ENCODE measurements at regions of chr1 and their contacts with region 1.

Region 1: DNA sequence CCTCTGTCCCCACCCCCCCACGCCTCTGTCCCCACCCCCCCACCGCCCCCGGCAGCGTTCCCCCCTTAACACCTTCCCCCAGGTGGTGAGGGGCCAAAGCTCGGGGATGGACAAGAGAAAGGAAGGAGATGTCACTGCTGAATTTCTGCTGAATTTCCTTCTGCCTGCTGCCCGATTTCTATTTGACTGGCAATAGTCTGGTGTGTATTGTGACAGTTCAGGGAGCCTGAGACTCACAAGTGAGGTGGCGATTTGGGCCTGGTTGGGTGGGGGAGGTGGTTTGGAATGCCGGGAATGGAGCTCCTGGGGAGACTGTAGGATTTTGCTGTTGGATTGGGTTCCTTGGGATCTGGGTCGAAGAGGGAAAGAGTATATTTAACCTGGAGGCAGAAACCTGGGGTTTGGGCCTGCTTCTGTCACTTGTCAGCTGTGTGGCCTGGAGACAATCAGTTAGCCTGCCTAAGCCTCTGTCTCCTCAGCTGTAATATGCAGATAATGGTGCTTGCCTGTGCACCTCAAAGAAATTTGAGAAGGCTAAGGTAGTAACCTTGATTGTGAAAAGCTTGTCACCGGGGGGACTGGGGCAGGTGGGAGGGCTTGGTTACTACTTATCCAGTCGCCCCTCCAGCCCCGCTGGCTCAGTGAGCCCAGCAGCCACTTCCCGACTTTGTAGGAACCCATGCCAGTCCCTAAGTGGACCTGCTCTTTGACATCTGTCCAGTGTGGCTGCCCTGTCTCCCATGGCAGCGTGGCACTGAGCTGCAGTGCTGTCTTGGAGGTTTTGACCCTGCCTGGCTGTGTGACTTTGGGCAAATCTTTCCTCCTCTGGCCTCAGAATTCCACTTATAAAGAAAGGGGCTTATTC is 7.7 kb upstream of the LMNA start:
- DNase-seq: no peak
- H3K4me3 Mint-ChIP-seq: peak overlapping the region; percentile 72
- H3K27ac Mint-ChIP-seq: peak overlapping the region; percentile 96
- H3K4me1 Mint-ChIP-seq: peaks cover 45% of the 10 kb centered on the region
- H3K27me3 Mint-ChIP-seq: peaks cover 33% of the 10 kb centered on the region

Region 2: GRCh38 chr1:156212833-156213643 is 106.2 kb after region 1 on chr1 and contains the start of gene PMF1:
- intact Hi-C with region 1: loop called (anchors 1 kb)
- DNase-seq: peak; percentile 98
- H3K4me3 Mint-ChIP-seq: peak within 1 kb of the TSS; percentile 98
- H3K27ac Mint-ChIP-seq: peak within 1 kb of the TSS; percentile 99
- H3K4me1 Mint-ChIP-seq: peaks cover 38% of the 10 kb centered on the region
- H3K27me3 Mint-ChIP-seq: no peaks in the 10 kb centered on the region
- total RNA-seq, gene PMF1: 107 and 113 TPM in 2 replicates

Region 3: GRCh38 chr1:156338180-156338973 is 231.5 kb after region 1 on chr1 and contains the starts of genes CCT3 and TSACC:
- intact Hi-C with region 1: no loop called
- DNase-seq: peak; percentile 100
- H3K4me3 Mint-ChIP-seq: peak within 1 kb of the TSS; percentile 99
- H3K27ac Mint-ChIP-seq: peak within 1 kb of the TSS; percentile 97
- H3K4me1 Mint-ChIP-seq: peaks cover 26% of the 10 kb centered on the region
- H3K27me3 Mint-ChIP-seq: peaks cover 9% of the 10 kb centered on the region
- total RNA-seq, gene CCT3: 623 TPM in 2 replicates
- total RNA-seq, gene TSACC: 0.47 and 0.82 TPM in 2 replicates

Measured in activated CD4-positive, alpha-beta T cell treated with anti-CD3 and anti-CD28 coated beads, Interleukin-2, amount 10 ng/mL, durations not matched to agents 24 days and 14 days (primary cell).